Right ventricle myocardium inferior (tissue), 1 donor: ENCODE measurements at regions of chr16 and their contacts with region 1.

Region 1: DNA sequence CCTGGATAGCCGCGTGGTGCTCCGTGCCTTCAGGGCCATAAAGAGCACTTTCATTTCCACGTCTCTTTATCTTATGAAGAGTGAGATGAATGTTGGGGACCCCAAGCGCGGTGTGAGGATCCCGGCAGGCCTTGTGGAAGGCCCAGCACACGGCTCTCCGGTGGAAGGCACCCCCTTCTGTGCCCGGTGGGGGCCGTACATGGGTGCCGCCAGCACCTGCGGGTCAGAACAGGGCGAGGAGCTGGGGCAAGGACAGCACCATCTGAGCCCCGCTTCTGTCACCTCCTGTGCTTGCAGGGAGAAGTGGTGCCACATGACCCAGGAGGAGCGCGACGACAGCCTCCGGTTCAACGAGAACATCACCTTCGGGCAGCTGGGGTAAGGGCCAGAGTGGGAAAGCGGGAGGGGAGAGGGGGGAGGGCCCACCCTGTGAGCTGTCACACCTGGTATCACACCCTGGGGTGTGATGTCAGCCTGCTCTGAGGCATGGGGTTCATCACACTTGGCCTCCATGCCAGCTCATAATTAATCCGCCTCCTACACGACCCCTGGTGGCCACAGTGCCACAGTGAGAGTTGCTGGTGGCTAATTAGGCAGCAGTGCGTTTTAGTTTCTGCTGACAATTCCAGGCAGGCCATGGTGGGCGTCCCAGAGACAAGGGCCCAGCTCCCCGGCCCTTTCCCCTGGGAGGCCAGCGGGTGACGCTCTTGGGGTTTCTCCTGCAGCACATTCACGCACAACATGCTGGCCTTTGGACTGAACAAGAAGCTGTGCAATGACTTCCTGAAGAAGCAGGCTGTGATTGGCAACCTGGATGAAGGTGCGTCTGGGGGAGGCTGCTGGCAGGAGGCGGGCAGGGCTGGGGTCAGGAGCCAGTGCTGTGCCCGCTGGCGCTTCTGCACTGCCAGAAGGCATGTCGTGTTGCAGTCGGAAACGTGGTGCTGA is 25.7 kb downstream of the CIBAR2 start:
- DNase-seq: peak; percentile 83
- ATAC-seq: peak; percentile 73

Region 2: GRCh38 chr16:84754353-84754856 is 332.2 kb before region 1 on chr16:
- intact Hi-C with region 1: loop called (anchors 5 kb)
- DNase-seq: no peak
- ATAC-seq: peak; percentile 71

Region 3: GRCh38 chr16:84985079-84986065 is 101.2 kb before region 1 on chr16:
- intact Hi-C with region 1: loop called (anchors 10 kb)
- DNase-seq: no peak
- ATAC-seq: no peak

Region 4: GRCh38 chr16:85010931-85011845 is 75.4 kb before region 1 on chr16 and contains the start of gene ZDHHC7:
- intact Hi-C with region 1: loop called (anchors 5 kb)
- DNase-seq: peak; percentile 94
- ATAC-seq: peak; percentile 95
- total RNA-seq, gene ZDHHC7: 41.4 TPM